Heart left ventricle (tissue), 16 donors: ENCODE measurements at regions of chr7 and their contacts with region 1.

Region 1: GRCh38 chr7:77759294-77759889 is 38.8 kb downstream of the TMEM60 start:
- DNase-seq: peak in 2 of 5 donors; percentile 52
- ATAC-seq: peak in 3 of 4 donors; percentile 57 to 77 (median 74)
- H3K4me3 ChIP-seq: no peak overlapping the region
- H3K27ac ChIP-seq: peak overlapping the region in 1 of 12 donors; percentile 17
- H3K4me1 ChIP-seq: peaks cover 0 to 36% (median 7%) of the 10 kb centered on the region in 12 donors
- H3K27me3 ChIP-seq: no peaks in the 10 kb centered on the region
- CTCF ChIP-seq: peak; percentile 71 to 92 (median 83)
- POLR2A ChIP-seq: no peak

Region 2: GRCh38 chr7:77439572-77439971 is 319.8 kb before region 1 on chr7:
- intact Hi-C with region 1: loop called in 3 of 10 experiments (anchors 5 to 10 kb)
- DNase-seq: peak in 4 of 5 donors; percentile 36 to 58 (median 52)
- ATAC-seq: peak; percentile 64 to 93 (median 90)
- H3K4me3 ChIP-seq: no peak overlapping the region
- H3K27ac ChIP-seq: no peak overlapping the region
- H3K4me1 ChIP-seq: peaks cover 0 to 16% (median 0%) of the 10 kb centered on the region in 12 donors
- H3K27me3 ChIP-seq: no peaks in the 10 kb centered on the region
- CTCF ChIP-seq: peak; percentile 20 to 64 (median 46)
- POLR2A ChIP-seq: no peak

Region 3: GRCh38 chr7:77651573-77652162 is 107.7 kb before region 1 on chr7:
- intact Hi-C with region 1: loop called in 9 of 10 experiments (anchors 2 to 5 kb)
- DNase-seq: no peak
- ATAC-seq: no peak
- H3K4me3 ChIP-seq: no peak overlapping the region
- H3K27ac ChIP-seq: no peak overlapping the region
- H3K4me1 ChIP-seq: peaks cover 0 to 11% (median 0%) of the 10 kb centered on the region in 12 donors
- H3K27me3 ChIP-seq: no peaks in the 10 kb centered on the region
- CTCF ChIP-seq: peak; percentile 57 to 81 (median 76)
- POLR2A ChIP-seq: no peak

Region 4: DNA sequence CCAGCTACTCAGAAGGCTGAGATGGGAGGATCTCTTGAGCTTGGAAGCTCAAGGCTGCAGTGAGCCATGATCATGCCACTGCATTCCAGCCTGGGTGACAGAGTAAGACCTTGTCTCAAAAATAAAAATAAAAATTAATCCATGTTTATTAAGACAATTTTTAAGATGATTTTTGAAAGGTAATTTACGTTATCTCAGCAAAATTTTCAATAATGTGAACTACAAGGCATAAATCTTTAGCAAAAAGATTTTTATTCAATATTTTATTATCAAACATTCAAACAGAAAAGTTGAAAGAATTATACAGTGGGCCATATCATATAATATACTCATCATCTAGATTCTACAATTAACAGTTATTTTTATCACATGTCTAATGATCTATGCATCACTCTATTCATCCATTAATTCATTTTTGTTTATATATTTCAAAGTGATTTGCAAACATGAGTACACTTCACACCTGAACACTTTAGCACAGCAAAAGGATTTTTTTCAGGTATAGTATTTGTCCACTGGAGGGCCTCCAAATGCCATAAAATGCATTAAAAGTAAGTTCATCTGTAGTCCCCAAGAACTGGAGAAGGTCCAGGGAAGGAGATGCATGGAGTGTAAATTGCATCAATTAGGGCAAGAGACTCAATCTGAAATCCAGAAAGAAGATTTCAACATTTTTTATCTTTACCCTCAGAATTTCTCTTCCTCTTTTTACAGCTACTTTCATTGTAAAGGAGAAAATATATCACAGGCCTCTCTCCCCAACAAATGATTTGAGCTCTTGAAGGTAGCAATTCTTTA is 101.8 kb before region 1 on chr7:
- intact Hi-C with region 1: loop called in 8 of 10 experiments (anchors 2 to 5 kb)
- DNase-seq: no peak
- ATAC-seq: peak in 1 of 4 donors; percentile 32
- H3K4me3 ChIP-seq: no peak overlapping the region
- H3K27ac ChIP-seq: no peak overlapping the region
- H3K4me1 ChIP-seq: peaks cover 0 to 3% (median 0%) of the 10 kb centered on the region in 12 donors
- H3K27me3 ChIP-seq: no peaks in the 10 kb centered on the region
- CTCF ChIP-seq: peak; percentile 19 to 60 (median 46)
- POLR2A ChIP-seq: no peak

Region 5: GRCh38 chr7:78052112-78052511 is 292.7 kb after region 1 on chr7:
- intact Hi-C with region 1: no loop called
- DNase-seq: no peak
- ATAC-seq: no peak
- H3K4me3 ChIP-seq: no peak overlapping the region
- H3K27ac ChIP-seq: no peak overlapping the region
- H3K4me1 ChIP-seq: no peaks in the 10 kb centered on the region
- H3K27me3 ChIP-seq: no peaks in the 10 kb centered on the region
- CTCF ChIP-seq: no peak
- POLR2A ChIP-seq: no peak

Region 6: DNA sequence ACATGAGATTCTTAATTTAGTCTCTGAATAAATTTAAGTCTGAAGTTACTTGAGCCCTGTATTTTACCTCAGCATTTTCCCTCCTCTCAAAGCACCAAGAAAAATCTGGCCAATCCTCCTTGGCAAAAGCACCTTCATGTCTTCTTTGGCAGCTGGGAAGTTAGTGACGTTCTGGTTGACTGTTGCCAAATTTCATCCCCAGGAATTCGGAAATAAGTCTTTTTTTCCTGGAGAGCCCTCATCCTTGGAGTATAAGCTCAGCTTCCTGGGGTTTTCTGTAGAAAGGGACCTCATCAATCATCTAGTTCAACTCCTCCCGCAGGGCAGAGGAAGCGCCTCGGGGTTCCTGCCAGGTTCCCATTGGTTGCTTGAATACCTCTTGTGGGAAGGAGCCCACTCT is 416.8 kb after region 1 on chr7:
- intact Hi-C with region 1: no loop called
- DNase-seq: no peak
- ATAC-seq: no peak
- H3K4me3 ChIP-seq: no peak overlapping the region
- H3K27ac ChIP-seq: peak overlapping the region in 1 of 12 donors; percentile 11
- H3K4me1 ChIP-seq: peaks cover 0 to 13% (median 0%) of the 10 kb centered on the region in 12 donors
- H3K27me3 ChIP-seq: no peaks in the 10 kb centered on the region
- CTCF ChIP-seq: no peak
- POLR2A ChIP-seq: no peak